ENCODE measurements at regions of chr10 and their contacts with region 1.

Region 1: GRCh38 chr10:102001435-102002068 is 54.4 kb downstream of the ARMH3 start:
- DNase-seq: no peak
- ATAC-seq: peak; percentile 86
- H3K4me3 Mint-ChIP-seq: peak overlapping the region; percentile 73
- H3K27ac Mint-ChIP-seq: peak overlapping the region; percentile 93
- H3K4me1 Mint-ChIP-seq: peaks cover 82% of the 10 kb centered on the region
- H3K27me3 Mint-ChIP-seq: no peaks in the 10 kb centered on the region
- CTCF ChIP-seq: no peak

Region 2: DNA sequence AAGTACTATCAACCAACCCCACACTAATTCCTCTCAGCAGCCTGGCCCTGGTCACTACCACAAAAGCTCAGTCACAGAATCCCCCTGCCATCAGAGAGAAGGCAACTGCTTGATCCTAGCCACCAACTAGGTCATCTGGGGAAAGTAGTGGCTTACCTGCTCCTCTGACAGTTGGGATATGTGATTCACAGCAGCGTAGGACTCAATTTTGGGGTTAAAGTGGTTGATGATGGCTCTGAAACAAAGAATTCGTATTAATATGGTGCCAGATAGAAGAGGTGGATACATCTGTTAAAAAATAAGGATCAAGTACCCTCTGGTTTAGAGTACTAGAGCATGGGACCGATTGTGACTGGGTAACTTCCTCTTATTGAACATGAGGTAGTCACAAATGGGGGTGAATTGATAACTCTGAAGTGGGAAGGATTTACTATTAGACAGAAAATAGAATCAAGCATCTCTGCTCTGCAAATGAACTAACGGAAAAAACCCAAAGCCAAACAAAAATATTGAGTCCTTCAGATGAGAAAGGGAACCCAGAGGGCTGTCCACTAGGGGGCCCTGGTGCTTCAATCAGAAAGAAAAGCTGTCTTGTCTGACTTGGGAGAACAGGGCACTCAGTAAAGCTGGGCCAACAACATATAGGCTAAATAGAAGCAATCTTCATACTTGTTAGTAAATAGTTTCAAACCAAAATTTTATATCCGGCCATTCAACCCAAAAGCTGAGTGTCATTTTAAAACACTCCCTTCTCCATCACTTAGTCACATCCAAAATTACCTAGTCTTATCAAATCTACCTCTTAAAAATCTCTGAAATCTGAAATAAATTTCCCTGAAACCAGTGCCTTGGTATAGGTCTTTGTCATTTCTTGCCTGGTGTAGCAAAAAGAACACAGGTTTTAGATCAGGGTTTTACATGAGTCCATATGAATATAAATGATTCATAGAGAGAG is 112.0 kb before region 1 on chr10:
- CTCF ChIA-PET with region 1: interaction called, 338 read pairs
- POLR2A ChIA-PET with region 1: interaction called, 64 read pairs
- intact Hi-C with region 1: no loop called
- DNase-seq: peak; percentile 62
- ATAC-seq: peak; percentile 96
- H3K4me3 Mint-ChIP-seq: no peak overlapping the region
- H3K27ac Mint-ChIP-seq: peak overlapping the region; percentile 79
- H3K4me1 Mint-ChIP-seq: peaks cover 41% of the 10 kb centered on the region
- H3K27me3 Mint-ChIP-seq: no peaks in the 10 kb centered on the region
- CTCF ChIP-seq: peak; percentile 62

Region 3: DNA sequence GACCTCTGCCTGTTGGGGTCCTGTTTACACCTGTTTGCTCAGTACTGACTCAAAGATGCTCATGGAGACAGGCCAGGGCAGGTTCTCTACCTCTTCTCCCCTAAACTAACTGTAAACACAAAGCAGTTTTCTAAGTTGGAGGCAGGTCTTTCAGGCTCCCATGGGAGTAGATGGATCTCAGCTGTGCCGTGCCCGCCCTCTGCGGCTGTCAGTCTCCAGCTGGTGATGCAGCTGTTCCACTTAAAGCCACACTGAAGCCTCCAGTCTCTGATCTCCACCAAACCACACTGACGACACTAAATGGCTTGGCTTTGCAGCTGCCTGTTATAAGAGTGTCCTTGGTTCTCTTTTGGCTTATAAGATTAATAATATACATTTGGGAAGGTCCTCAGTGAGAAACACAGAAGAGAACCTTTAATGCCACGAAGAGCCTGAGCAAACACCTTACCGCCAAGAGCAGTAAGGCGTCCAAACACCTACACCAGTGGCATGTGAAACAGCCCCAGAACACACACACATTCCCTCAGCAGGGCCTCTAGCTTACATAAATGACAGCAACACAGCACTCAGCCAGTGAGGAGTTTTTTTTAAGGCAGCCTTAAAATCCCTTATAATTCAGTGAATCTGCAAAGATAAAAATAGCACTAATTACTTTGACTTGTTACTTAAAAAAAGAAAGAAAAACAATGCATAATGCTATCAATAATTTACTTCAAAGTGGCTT is 97.6 kb before region 1 on chr10:
- CTCF ChIA-PET with region 1: interaction called, 46 read pairs
- POLR2A ChIA-PET with region 1: interaction called, 16 read pairs
- intact Hi-C with region 1: no loop called
- DNase-seq: peak; percentile 53
- ATAC-seq: peak; percentile 79
- H3K4me3 Mint-ChIP-seq: peak overlapping the region; percentile 57
- H3K27ac Mint-ChIP-seq: peak overlapping the region; percentile 95
- H3K4me1 Mint-ChIP-seq: peaks cover 85% of the 10 kb centered on the region
- H3K27me3 Mint-ChIP-seq: no peaks in the 10 kb centered on the region
- CTCF ChIP-seq: no peak

Region 4: GRCh38 chr10:101968940-101969321 is 32.6 kb before region 1 on chr10:
- CTCF ChIA-PET with region 1: interaction called, 46 read pairs
- POLR2A ChIA-PET with region 1: interaction called, 58 read pairs
- intact Hi-C with region 1: loop called (anchors 1 kb)
- DNase-seq: no peak
- ATAC-seq: peak; percentile 63
- H3K4me3 Mint-ChIP-seq: peak overlapping the region; percentile 70
- H3K27ac Mint-ChIP-seq: peak overlapping the region; percentile 95
- H3K4me1 Mint-ChIP-seq: peaks cover 97% of the 10 kb centered on the region
- H3K27me3 Mint-ChIP-seq: no peaks in the 10 kb centered on the region
- CTCF ChIP-seq: no peak

Region 5: DNA sequence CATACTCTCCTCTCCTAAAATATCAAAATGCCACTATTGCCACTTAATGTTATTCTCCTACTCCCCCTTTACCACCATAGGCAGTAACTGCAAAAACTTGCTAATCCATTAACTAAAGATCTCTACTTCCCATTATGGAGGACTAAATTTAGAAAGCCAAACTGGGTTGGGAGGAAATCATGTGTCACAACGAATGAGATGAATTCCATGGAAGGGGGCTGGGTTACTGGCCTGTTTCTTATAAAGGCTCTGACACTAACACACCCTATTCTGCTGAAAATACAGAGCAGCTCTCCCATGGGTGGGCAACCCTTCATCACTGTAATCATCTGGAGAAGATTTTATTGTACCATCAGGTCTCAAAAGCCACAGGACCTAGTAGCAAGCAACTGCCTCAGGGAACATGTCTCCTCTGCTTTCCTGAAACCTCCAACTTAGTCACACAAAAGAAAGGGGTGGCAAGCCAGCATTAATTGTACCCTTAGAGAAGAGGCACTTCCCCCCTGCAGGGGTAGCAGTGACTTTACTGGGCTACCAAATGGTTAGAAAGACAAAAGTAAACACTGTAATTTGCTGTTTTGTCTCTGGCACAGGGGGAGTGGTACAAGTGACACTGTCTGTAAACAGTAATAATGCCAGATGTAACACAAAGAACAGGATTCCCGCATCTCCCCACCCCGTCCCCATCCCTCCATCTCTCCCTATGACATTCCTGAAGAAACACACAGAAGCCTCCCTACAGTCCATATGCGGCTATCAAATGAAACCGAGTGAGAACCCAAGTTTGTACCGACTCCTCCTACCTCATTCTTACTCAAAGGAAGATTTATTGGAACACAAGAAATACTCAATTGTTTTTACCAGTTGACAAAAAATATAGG is 27.2 kb before region 1 on chr10:
- CTCF ChIA-PET with region 1: interaction called, 46 read pairs
- POLR2A ChIA-PET with region 1: interaction called, 58 read pairs
- intact Hi-C with region 1: loop called (anchors 1 kb)
- DNase-seq: no peak
- ATAC-seq: no peak
- H3K4me3 Mint-ChIP-seq: peak overlapping the region; percentile 74
- H3K27ac Mint-ChIP-seq: peak overlapping the region; percentile 88
- H3K4me1 Mint-ChIP-seq: peaks cover 67% of the 10 kb centered on the region
- H3K27me3 Mint-ChIP-seq: no peaks in the 10 kb centered on the region
- CTCF ChIP-seq: no peak

Region 6: GRCh38 chr10:101986625-101986973 is 15.0 kb before region 1 on chr10:
- CTCF ChIA-PET with region 1: no interaction called
- POLR2A ChIA-PET with region 1: interaction called, 14 read pairs
- intact Hi-C with region 1: loop called (anchors 1 kb)
- DNase-seq: no peak
- ATAC-seq: peak; percentile 81
- H3K4me3 Mint-ChIP-seq: peak overlapping the region; percentile 75
- H3K27ac Mint-ChIP-seq: peak overlapping the region; percentile 90
- H3K4me1 Mint-ChIP-seq: peaks cover 23% of the 10 kb centered on the region
- H3K27me3 Mint-ChIP-seq: no peaks in the 10 kb centered on the region
- CTCF ChIP-seq: no peak

Measured in activated B cell treated with CpG ODN at 0.5 μM for 24 hours (primary cell).